Right ventricle myocardium superior (tissue), 1 donor: ENCODE measurements at regions of chr1 and their contacts with region 1.

Region 1: DNA sequence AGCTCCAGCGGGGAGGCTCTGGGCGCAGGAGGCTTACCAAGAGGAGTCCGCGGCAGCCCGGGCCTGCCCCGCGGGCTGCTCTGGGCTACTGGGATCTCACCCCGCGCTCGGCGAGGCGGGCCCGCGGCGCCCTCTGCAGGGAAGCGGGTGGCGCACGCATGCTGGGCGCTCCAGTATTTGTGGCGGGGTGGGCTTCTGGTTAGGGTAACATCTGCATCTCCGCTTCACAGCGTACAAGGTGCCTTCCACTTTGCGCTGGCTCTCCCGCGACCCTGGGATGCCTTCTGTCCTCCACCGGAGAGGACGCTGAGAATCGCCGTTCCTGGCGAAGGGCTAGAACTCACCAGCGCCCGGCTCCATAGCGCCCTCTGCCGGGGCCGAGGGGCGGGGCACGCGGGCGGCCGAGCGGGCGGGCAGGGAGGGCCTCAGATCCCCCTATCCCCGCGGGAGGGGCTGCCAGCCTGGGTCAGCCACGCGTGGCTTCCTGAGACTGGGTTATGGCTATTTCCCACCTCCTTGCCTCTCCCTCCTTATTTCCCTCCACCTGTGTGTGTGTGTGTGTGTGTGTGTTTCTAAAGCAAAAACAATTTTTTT is 46.6 kb upstream of the CTBS start:
- DNase-seq: peak; percentile 85
- ATAC-seq: peak; percentile 97

Region 2: GRCh38 chr1:84450910-84451309 is 169.9 kb before region 1 on chr1:
- intact Hi-C with region 1: loop called (anchors 5 kb)
- DNase-seq: no peak
- ATAC-seq: no peak

Region 3: GRCh38 chr1:84689514-84690396 is 68.9 kb after region 1 on chr1:
- intact Hi-C with region 1: loop called (anchors 10 kb)
- DNase-seq: peak; percentile 70
- ATAC-seq: peak; percentile 48